Dorsolateral prefrontal cortex (tissue), 120 donors: ENCODE measurements at regions of chr1 and their contacts with region 1.

Region 1: GRCh38 chr1:50633465-50633864 is 210.2 kb upstream of the DMRTA2 start:
- DNase-seq: no peak
- H3K4me3 ChIP-seq: peak overlapping the region in 27 of 59 donors; percentile 1 to 49 (median 26)
- H3K27ac ChIP-seq: peak overlapping the region in 51 of 59 donors; percentile 1 to 89 (median 70)
- H3K27me3 ChIP-seq: no peaks in the 10 kb centered on the region
- CTCF ChIP-seq: peak in 1 of 56 donors; percentile 5

Region 2: GRCh38 chr1:50502147-50502546 is 131.3 kb before region 1 on chr1:
- intact Hi-C with region 1: no loop called
- DNase-seq: no peak
- H3K4me3 ChIP-seq: no peak overlapping the region
- H3K27ac ChIP-seq: no peak overlapping the region
- H3K27me3 ChIP-seq: no peaks in the 10 kb centered on the region
- CTCF ChIP-seq: no peak

Region 3: DNA sequence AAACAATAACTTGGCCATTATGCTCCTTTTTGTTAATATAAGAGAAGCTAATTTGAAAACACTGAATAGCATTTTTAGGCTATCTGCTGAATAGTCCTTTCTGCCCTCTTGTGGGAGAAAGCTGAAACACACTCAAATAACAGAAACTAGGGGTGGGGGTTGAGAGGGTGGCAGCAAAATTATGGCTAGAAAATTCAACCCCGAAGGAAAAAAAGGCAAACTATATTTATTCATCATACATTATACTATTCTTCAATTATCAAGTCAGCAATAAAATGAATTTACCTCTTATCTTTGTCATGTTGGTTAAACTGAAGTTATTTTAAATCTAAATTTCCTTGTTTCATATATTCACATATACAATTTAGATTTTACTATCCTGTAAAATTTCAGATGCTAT is 70.7 kb after region 1 on chr1:
- intact Hi-C with region 1: loop called in 1 of 2 experiments (anchors 10 kb)
- DNase-seq: no peak
- H3K4me3 ChIP-seq: peak overlapping the region in 17 of 59 donors; percentile 4 to 34 (median 19)
- H3K27ac ChIP-seq: peak overlapping the region in 50 of 59 donors; percentile 6 to 99 (median 96)
- H3K27me3 ChIP-seq: no peaks in the 10 kb centered on the region
- CTCF ChIP-seq: peak; percentile 68 to 94 (median 85)